Naive thymus-derived CD8-positive, alpha-beta T cell (primary cell): ENCODE measurements at regions of chr11 and their contacts with region 1.

Region 1: GRCh38 chr11:47152953-47153950 is 23.4 kb downstream of the ARFGAP2 start:
- DNase-seq: peak in 9 of 10 donors; percentile 34 to 73 (median 58)
- ATAC-seq: peak; percentile 47 to 48
- H3K4me3 Mint-ChIP-seq: peak overlapping the region; percentile 66 to 92 (median 82)
- H3K27ac Mint-ChIP-seq: peak overlapping the region; percentile 93 to 99 (median 96)
- H3K4me1 Mint-ChIP-seq: peaks cover 30 to 55% (median 43%) of the 10 kb centered on the region in 4 donors
- H3K27me3 Mint-ChIP-seq: no peaks in the 10 kb centered on the region

Region 2: GRCh38 chr11:46888636-46889035 is 264.6 kb before region 1 on chr11:
- POLR2A ChIA-PET with region 1: interaction called, 11 read pairs
- DNase-seq: no peak
- ATAC-seq: no peak
- H3K4me3 Mint-ChIP-seq: no peak overlapping the region
- H3K27ac Mint-ChIP-seq: no peak overlapping the region
- H3K4me1 Mint-ChIP-seq: peaks cover 0 to 8% (median 2%) of the 10 kb centered on the region in 4 donors
- H3K27me3 Mint-ChIP-seq: peaks cover 0 to 13% (median 1%) of the 10 kb centered on the region in 5 donors

Region 3: DNA sequence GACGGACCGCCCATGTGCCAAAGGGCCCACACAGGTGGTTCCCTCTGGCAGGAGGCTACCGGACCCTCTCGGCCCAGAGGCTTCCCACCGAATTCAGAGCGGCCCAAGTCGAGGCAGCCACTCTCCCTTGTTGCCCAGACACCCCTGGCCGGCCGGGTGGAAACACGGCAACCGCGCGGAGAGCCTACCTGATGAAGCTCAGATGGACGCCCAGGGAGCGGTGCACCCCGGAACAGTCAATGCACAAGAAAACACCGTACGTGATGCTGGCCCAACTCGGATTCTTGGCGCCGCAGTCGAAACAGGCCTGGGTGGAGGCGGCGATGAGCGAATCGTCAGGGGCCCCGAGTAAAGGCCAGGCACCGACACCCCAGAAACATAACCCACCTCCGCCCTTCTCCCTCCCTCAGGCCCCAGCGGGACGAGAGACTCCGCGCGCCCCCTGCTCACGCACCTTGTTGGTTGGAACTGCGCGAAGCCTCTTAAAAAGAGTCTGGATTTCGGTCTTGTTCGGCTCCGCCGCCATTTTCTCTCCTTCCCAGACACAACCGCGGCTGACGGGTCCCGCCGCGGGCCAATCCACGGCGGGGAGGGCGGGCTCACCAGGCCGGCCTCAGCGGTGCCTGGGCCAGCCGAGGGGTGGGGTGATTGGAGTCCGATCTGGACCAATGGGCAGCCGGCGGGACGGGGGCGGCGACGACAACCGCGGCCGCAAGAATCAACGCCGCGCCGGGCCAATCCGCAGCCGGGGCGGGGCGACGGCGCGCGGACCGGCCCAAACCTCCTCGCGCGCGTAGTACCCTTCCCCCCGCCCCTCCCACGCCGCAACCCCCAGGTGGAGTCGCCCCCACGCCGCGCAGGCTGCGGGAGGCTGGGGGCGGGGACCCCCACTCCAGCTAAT is 23.3 kb after region 1 on chr11 and contains the start of gene ARFGAP2:
- POLR2A ChIA-PET with region 1: interaction called, 21 read pairs
- DNase-seq: peak; percentile 92 to 97 (median 95)
- ATAC-seq: peak; percentile 92 to 93
- H3K4me3 Mint-ChIP-seq: peak within 1 kb of the TSS; percentile 91 to 99 (median 97)
- H3K27ac Mint-ChIP-seq: peak within 1 kb of the TSS; percentile 97 to 100 (median 100)
- H3K4me1 Mint-ChIP-seq: peaks cover 22 to 53% (median 52%) of the 10 kb centered on the region in 4 donors
- H3K27me3 Mint-ChIP-seq: peaks cover 0 to 4% (median 0%) of the 10 kb centered on the region in 5 donors
- polyA plus RNA-seq, gene ARFGAP2: 97.8 to 111 (median 108) TPM

Region 4: GRCh38 chr11:47373876-47374720 is 220.8 kb after region 1 on chr11:
- POLR2A ChIA-PET with region 1: no interaction called
- DNase-seq: peak; percentile 67 to 92 (median 84)
- ATAC-seq: peak; percentile 96 to 99
- H3K4me3 Mint-ChIP-seq: no peak overlapping the region
- H3K27ac Mint-ChIP-seq: peak overlapping the region in 5 of 10 donors; percentile 13 to 72 (median 53)
- H3K4me1 Mint-ChIP-seq: peaks cover 4 to 23% (median 8%) of the 10 kb centered on the region in 4 donors
- H3K27me3 Mint-ChIP-seq: no peaks in the 10 kb centered on the region